ENCODE measurements at regions of chr1 and their contacts with region 1.

Region 1: DNA sequence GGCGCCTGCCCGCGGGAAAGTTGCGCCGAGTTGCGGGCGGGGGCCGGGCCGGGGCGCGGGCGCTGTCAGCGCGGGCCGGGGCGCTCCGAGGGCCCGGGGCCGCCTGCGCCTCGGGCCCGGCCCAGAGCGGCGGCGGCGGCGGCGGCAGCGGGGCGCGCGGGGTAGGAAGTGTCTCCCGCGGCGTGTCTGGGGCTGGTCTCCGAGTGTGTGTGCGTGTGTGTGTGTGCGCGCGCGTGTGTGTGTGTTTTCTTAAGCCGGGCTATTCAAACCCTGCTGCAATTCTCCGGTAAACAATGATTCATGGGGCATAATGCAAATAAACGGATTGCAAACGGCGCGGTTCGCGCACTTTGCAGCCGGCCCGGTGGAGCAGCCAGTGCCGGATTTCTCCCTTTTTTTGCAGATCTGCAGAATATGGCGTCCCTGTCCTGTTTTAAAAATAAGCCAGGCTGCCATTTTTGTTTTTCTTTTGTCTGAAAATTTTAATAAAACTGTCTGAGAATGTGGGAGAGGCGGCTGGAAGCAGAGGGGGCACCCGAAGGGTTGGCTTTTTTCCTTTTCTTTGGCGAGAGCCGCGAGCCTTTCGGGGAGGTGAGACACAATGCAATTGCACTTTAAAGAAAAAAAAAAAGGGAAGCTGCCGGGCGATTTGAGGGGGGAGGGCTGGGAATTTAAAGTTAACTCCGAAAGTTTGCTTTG is 558 bp downstream of the ZNF362 start:
- DNase-seq: peak in 1 of 2 donors; percentile 76
- H3K4me3 ChIP-seq: peak overlapping the region; percentile 74 to 82
- H3K27ac ChIP-seq: peak overlapping the region; percentile 95 to 97
- H3K4me1 ChIP-seq: peaks cover 19 to 45% of the 10 kb centered on the region in 2 donors
- H3K27me3 ChIP-seq: no peaks in the 10 kb centered on the region
- CTCF ChIP-seq: no peak

Region 2: DNA sequence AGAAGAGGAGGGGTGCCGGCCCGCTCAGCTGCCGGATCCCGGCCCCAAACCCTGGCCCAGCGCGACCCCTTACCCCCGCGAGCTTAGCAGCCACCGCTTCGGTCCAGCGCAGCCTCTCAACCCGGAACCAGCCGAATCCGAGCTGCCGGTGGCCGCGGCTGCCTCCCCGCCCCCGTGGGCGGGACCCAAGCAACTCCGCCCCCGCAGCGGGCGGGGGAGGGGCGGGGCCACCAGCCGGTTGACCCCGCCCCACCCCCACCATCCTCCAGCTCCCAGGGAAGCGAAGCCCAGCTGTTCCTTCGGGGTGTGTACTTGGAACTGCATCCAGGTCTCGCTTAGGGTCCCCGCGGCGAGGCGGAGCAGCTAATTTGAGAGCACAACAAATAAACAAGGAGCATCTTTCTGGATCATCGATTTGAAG is 74.9 kb before region 1 on chr1 and contains the start of gene TRIM62:
- intact Hi-C with region 1: loop called (anchors 5 kb)
- DNase-seq: peak; percentile 27 to 92
- H3K4me3 ChIP-seq: peak within 1 kb of the TSS; percentile 79 to 87
- H3K27ac ChIP-seq: peak within 1 kb of the TSS; percentile 82 to 92
- H3K4me1 ChIP-seq: peaks cover 0 to 12% of the 10 kb centered on the region in 2 donors
- H3K27me3 ChIP-seq: no peaks in the 10 kb centered on the region
- CTCF ChIP-seq: no peak
- total RNA-seq, gene TRIM62: 18.1 TPM

Region 3: GRCh38 chr1:33338440-33339211 is 81.8 kb after region 1 on chr1:
- intact Hi-C with region 1: loop called (anchors 5 kb)
- DNase-seq: peak in 1 of 2 donors; percentile 89
- H3K4me3 ChIP-seq: peak overlapping the region; percentile 39 to 40
- H3K27ac ChIP-seq: peak overlapping the region; percentile 91 to 100
- H3K4me1 ChIP-seq: peaks cover 58 to 97% of the 10 kb centered on the region in 2 donors
- H3K27me3 ChIP-seq: no peaks in the 10 kb centered on the region
- CTCF ChIP-seq: no peak

Region 4: DNA sequence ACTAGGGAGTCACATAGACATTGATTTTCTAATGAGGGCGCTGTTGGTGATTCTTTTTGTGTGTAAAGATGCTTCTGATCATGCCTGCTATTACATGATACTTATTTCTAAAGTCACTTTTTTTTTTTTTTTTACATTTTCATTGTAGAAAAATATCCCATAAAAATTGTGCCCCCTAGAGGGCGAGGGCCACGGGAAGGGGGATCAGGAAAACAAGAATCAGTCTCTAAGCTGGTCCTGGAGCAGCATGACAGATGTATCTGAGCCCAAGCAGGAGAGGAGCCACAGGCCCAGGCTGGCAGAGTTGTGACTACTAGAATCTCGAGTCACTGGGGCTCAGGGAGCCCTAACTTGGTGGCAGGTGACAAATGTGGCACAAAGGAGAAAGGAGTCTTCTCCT is 243.7 kb after region 1 on chr1:
- intact Hi-C with region 1: no loop called
- DNase-seq: no peak
- H3K4me3 ChIP-seq: no peak overlapping the region
- H3K27ac ChIP-seq: no peak overlapping the region
- H3K4me1 ChIP-seq: no peaks in the 10 kb centered on the region
- H3K27me3 ChIP-seq: no peaks in the 10 kb centered on the region
- CTCF ChIP-seq: no peak

Region 5: DNA sequence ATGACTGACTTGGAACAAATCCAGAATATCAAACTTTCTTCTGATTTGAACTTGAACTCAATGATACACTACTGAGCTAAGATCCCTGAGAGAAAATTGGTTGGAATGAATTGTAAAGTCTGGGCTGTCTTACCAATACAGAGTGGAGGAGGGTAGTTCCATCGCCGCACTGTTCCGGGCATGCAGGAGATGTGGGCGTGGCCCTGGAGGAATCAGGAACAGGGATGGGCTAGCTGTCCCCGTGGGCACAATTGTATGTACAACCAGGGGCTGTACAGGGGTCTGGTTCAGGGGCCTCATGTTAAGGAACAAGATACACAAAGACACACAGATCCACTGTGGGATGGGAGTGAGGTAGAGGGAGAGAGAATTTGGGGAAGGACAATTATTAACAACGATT is 359.9 kb after region 1 on chr1:
- intact Hi-C with region 1: no loop called
- DNase-seq: peak in 1 of 2 donors; percentile 43
- H3K4me3 ChIP-seq: no peak overlapping the region
- H3K27ac ChIP-seq: no peak overlapping the region
- H3K4me1 ChIP-seq: no peaks in the 10 kb centered on the region
- H3K27me3 ChIP-seq: no peaks in the 10 kb centered on the region
- CTCF ChIP-seq: no peak

Measured in ascending aorta (tissue), 2 donors.